PC-3 (cell line): ENCODE measurements at regions of chr13 and their contacts with region 1.

Region 1: DNA sequence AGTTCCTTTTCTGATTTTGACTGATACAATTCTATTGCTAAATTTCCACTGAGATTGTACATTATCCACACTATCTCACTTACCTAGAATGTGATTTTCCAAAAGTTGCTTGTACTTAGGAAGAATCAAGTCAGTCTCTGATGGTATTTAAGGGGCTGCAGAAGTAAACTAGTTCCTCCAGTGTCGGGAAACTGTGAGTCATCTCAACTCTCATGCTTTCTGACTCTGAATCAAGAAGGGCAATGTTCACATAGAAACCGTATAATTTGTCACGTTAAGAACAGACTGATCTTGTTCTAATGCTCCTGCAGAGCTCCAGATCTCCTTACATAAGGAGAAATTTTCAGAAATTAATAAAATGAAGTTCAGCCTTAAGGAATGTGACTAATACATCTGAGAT is 369.3 kb downstream of the KLF5 start:
- DNase-seq: peak; percentile 84
- ATAC-seq: peak; percentile 71
- H3K4me3 ChIP-seq: no peak overlapping the region; the same call in 1 of the 2 replicates
- H3K27ac ChIP-seq: peak overlapping the region; percentile 99
- H3K4me1 ChIP-seq: peaks cover 37% of the 10 kb centered on the region
- H3K27me3 ChIP-seq: no peaks in the 10 kb centered on the region
- CTCF ChIP-seq: no peak

Region 2: DNA sequence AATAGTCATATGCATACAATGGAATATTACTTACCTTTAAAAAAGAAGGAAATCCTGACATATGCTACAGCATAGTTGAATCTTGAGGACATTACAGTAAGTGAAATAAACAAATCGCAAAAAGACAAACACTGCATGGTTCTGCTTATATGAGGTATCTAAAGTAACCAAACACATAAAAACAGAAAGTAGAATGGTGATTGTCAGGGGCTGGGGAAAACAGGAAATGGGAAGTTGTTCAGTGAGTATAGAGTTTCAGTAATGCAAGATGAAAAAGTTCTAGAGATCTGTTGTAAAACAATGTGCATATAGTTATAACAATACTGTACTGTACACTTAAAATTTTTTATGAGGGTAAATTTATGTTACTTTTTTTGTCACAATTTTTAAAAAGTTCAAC is 150.0 kb before region 1 on chr13:
- CTCF ChIA-PET with region 1: no interaction called
- POLR2A ChIA-PET with region 1: no interaction called
- intact Hi-C with region 1: no loop called
- DNase-seq: no peak
- ATAC-seq: no peak
- H3K4me3 ChIP-seq: no peak overlapping the region
- H3K27ac ChIP-seq: no peak overlapping the region
- H3K4me1 ChIP-seq: no peaks in the 10 kb centered on the region
- H3K27me3 ChIP-seq: no peaks in the 10 kb centered on the region
- CTCF ChIP-seq: no peak

Region 3: DNA sequence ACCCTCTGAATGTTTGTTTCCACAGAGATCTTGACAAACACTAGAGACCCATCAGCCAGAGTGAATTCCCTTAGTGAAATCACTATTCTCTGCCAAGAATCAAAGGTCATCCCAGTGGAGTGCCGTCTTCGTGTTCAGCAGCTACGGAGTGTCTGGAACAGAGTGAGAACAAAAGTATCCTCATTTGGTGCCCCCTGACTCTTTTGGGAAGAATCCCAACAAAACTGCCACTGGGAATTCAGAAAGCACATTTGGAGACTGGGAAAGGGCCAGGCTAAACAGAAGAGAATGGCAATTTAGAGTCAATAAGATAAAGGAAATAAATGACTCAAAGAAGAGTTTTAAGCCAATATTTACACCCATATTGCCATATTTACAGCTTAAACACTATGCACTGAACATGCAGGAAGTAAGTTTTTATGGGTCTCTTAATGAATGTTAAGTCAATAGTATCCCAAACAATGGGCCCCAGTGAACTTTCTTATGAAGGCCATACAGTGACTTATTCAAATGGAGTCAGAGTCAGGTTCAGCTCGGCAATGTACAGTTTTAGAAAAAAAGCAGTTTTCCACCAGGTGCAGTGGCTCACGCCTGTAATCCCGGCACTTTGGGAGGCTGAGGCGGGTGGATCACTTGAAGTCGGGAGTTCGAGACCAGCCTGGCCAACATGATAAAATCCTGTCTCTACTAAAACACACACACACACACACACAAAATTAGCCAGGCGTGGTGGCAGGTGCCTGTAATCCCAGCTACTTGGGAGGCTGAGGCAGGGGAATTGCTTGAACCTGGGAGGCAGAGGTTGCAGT is 23.3 kb after region 1 on chr13:
- CTCF ChIA-PET with region 1: no interaction called
- POLR2A ChIA-PET with region 1: no interaction called
- intact Hi-C with region 1: loop called (anchors 2 kb)
- DNase-seq: peak; percentile 86
- ATAC-seq: peak; percentile 94
- H3K4me3 ChIP-seq: peak overlapping the region; percentile 7; the same call in 1 of the 2 replicates
- H3K27ac ChIP-seq: peak overlapping the region; percentile 98
- H3K4me1 ChIP-seq: peaks cover 40% of the 10 kb centered on the region
- H3K27me3 ChIP-seq: no peaks in the 10 kb centered on the region
- CTCF ChIP-seq: no peak

Region 4: DNA sequence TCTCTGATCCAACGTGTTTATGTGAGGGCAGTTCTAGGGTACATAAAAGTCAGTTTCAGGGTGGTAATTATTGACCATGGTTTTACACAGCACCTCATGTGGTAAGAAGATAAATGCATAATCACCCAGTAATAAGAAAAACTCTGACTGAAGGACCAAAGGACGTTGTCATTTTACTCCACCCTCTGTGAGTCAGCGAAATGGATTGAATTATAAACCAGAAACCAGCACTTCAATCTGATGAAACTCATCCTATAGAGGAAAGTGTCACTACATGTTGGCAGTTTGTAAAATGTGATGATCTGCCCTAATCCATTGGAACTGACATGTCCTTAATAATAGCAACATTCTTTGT is 37.5 kb after region 1 on chr13:
- CTCF ChIA-PET with region 1: no interaction called
- POLR2A ChIA-PET with region 1: no interaction called
- intact Hi-C with region 1: loop called (anchors 1 kb)
- DNase-seq: peak; percentile 85
- ATAC-seq: peak; percentile 84
- H3K4me3 ChIP-seq: no peak overlapping the region
- H3K27ac ChIP-seq: peak overlapping the region; percentile 97
- H3K4me1 ChIP-seq: peaks cover 31% of the 10 kb centered on the region
- H3K27me3 ChIP-seq: no peaks in the 10 kb centered on the region
- CTCF ChIP-seq: no peak

Region 5: DNA sequence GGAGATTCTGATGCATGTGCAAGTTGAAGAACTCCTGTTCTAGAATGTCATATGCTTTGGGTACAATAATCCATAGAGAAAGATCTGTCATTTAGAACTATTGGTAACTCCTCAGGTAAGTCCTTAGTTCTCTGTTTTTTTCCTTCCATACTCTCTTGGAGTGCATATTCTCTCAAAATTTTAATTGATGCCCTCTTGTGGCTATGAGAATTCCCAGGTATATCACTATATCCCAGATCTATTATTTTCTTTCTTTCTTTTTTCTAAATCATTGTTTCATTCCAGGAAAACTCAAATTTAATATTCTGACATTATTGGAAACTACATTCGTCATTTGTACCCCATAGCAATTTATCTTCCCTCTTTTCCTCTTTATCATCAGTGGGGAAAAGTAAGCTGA is 116.0 kb after region 1 on chr13:
- CTCF ChIA-PET with region 1: no interaction called
- POLR2A ChIA-PET with region 1: no interaction called
- intact Hi-C with region 1: loop called (anchors 5 kb)
- DNase-seq: peak; percentile 27
- ATAC-seq: peak; percentile 57; the same call in 1 of the 2 replicates
- H3K4me3 ChIP-seq: no peak overlapping the region
- H3K27ac ChIP-seq: peak overlapping the region; percentile 1; the same call in 1 of the 2 replicates
- H3K4me1 ChIP-seq: peaks cover 10% of the 10 kb centered on the region; the same call in 1 of the 2 replicates
- H3K27me3 ChIP-seq: no peaks in the 10 kb centered on the region
- CTCF ChIP-seq: peak; percentile 50